HepG2 (cell line): ENCODE measurements at regions of chr3 and their contacts with region 1.

Region 1: GRCh38 chr3:15557511-15557946 is 36.0 kb upstream of the COLQ start:
- DNase-seq: peak; percentile 75
- ATAC-seq: peak; percentile 86
- H3K4me3 ChIP-seq: no peak overlapping the region
- H3K27ac ChIP-seq: peak overlapping the region; percentile 32
- H3K4me1 ChIP-seq: peaks cover 27% of the 10 kb centered on the region
- H3K27me3 ChIP-seq: no peaks in the 10 kb centered on the region
- CTCF ChIP-seq: peak; percentile 67
- EP300 ChIP-seq: no peak
- POLR2A ChIP-seq: no peak
- RAD21 ChIP-seq: peak; percentile 37

Region 2: GRCh38 chr3:15427182-15427880 is 130.2 kb before region 1 on chr3 and contains the starts of genes EAF1 and METTL6:
- CTCF ChIA-PET with region 1: no interaction called
- POLR2A ChIA-PET with region 1: interaction called, 3 read pairs
- in situ Hi-C with region 1: loop called (anchors 5 kb)
- intact Hi-C with region 1: loop called (anchors 1 kb)
- DNase-seq: peak; percentile 71
- ATAC-seq: peak; percentile 97
- H3K4me3 ChIP-seq: peak within 1 kb of the TSS; percentile 91 to 99 (median 97)
- H3K27ac ChIP-seq: peak within 1 kb of the TSS; percentile 80
- H3K4me1 ChIP-seq: peaks cover 37% of the 10 kb centered on the region
- H3K27me3 ChIP-seq: peaks cover 0 to 5% of the 10 kb centered on the region in 2 experiments; a peak in 1 of 5 replicates
- CTCF ChIP-seq: no peak; the same call in 1 of the 2 replicates
- EP300 ChIP-seq: no peak; a peak in 1 of 4 replicates
- POLR2A ChIP-seq: peak; percentile 68 to 74
- RAD21 ChIP-seq: no peak
- total RNA-seq, gene EAF1: 30.0 and 38.5 TPM in 2 replicates
- total RNA-seq, gene METTL6: 29.4 and 35.9 TPM in 2 replicates

Region 3: DNA sequence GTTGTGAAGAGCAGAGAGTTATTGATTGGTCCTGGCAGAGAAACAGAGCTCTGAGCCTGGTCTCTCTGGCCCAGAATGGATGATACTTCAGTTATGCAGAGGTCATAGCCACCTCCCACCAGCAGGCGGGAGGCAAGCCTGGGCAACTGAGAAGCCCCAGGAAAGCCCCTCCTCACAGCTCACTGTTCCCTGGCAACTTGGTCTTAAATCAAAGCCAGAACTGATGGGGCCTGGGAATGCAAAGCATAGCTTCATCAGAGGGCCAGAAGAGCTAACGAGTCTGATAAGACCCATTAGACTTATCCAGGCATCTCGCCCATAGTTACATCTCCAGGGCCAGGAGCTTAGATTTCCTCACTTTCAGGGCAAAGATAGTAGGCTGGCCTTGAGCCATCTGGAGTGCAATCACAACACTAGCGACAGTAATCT is 30.5 kb before region 1 on chr3:
- CTCF ChIA-PET with region 1: interaction called, 4 read pairs
- POLR2A ChIA-PET with region 1: no interaction called
- in situ Hi-C with region 1: no loop called
- intact Hi-C with region 1: loop called (anchors 2 kb)
- DNase-seq: peak; percentile 16
- ATAC-seq: peak; percentile 96
- H3K4me3 ChIP-seq: no peak overlapping the region
- H3K27ac ChIP-seq: no peak overlapping the region
- H3K4me1 ChIP-seq: 0 out of 2 replicates have a peak, but pooled peaks cover 8% of the 10 kb centered on the region
- H3K27me3 ChIP-seq: no peaks in the 10 kb centered on the region; a peak in 1 of 5 replicates
- CTCF ChIP-seq: peak; percentile 46
- EP300 ChIP-seq: no peak
- POLR2A ChIP-seq: no peak
- RAD21 ChIP-seq: no peak

Region 4: GRCh38 chr3:15538345-15538744 is 19.2 kb before region 1 on chr3:
- CTCF ChIA-PET with region 1: no interaction called
- POLR2A ChIA-PET with region 1: no interaction called
- in situ Hi-C with region 1: no loop called
- intact Hi-C with region 1: no loop called
- DNase-seq: no peak
- ATAC-seq: no peak
- H3K4me3 ChIP-seq: no peak overlapping the region
- H3K27ac ChIP-seq: no peak overlapping the region
- H3K4me1 ChIP-seq: no peaks in the 10 kb centered on the region
- H3K27me3 ChIP-seq: no peaks in the 10 kb centered on the region
- CTCF ChIP-seq: no peak
- EP300 ChIP-seq: no peak
- POLR2A ChIP-seq: no peak
- RAD21 ChIP-seq: no peak